Activated T-helper 1 cell treated with anti-CD3 and anti-CD28 coated beads, Interleukin-12 subunit alpha, Interleukin-12 subunit beta, Interleukin-2, Interleukin-4 antibody, amounts not matched to agents 30 ng/mL and 10 ng/mL and 1 ng/mL, durations not matched to agents 14 hours and 24 hours and 36 hours (primary cell): ENCODE measurements at regions of chrX and their contacts with region 1.

Region 1: DNA sequence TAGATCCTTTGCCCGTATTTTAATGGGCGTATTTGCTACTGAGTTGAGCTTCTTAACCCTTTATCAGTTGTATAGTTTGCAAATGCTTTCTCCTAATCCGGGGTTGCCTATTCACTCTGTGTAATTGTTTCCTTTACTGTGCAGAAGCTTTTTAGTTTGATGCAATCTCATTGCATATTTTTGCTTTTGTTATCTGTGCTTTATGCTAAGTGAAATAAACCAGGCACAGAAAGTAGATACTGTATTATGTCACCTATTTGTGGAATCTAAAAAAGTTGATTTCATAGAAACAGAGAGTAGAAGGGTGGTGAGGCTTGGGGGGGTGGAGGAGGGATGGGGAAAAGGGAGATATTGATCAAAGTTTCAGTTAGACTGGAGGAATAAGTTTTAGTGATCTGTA is 17.7 kb downstream of the OGT start:
- DNase-seq: no peak
- H3K4me3 Mint-ChIP-seq: no peak overlapping the region
- H3K27ac Mint-ChIP-seq: peak overlapping the region; percentile 76
- H3K4me1 Mint-ChIP-seq: peaks cover 5% of the 10 kb centered on the region
- H3K27me3 Mint-ChIP-seq: no peaks in the 10 kb centered on the region

Region 2: DNA sequence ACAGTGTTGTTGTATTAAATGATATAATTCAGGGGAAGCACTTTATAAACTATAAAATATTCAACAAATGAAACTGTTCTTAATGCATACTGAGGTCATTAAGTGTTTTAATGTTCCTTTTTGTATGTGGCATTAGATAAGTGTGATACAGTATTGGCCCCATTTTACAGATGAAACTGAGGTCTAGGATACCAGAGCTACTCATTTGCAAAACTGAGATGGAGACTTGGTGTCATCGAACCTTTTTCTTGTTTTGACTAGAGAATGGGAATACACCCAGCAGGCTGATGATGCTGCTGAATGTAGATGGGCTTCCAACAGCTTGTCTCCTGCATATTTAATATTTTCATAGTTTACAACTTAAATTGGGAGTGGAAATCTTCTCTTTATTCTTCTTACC is 149.9 kb before region 1 on chrX:
- intact Hi-C with region 1: loop called (anchors 10 kb)
- DNase-seq: no peak
- H3K4me3 Mint-ChIP-seq: no peak overlapping the region
- H3K27ac Mint-ChIP-seq: no peak overlapping the region
- H3K4me1 Mint-ChIP-seq: peaks cover 4% of the 10 kb centered on the region
- H3K27me3 Mint-ChIP-seq: no peaks in the 10 kb centered on the region

Region 3: GRCh38 chrX:71650333-71650969 is 99.9 kb after region 1 on chrX:
- intact Hi-C with region 1: no loop called
- DNase-seq: no peak
- H3K4me3 Mint-ChIP-seq: no peak overlapping the region
- H3K27ac Mint-ChIP-seq: no peak overlapping the region
- H3K4me1 Mint-ChIP-seq: peaks cover 22% of the 10 kb centered on the region
- H3K27me3 Mint-ChIP-seq: peaks cover 2% of the 10 kb centered on the region